BJ (cell line): ENCODE measurements at regions of chr2 and their contacts with region 1.

Region 1: DNA sequence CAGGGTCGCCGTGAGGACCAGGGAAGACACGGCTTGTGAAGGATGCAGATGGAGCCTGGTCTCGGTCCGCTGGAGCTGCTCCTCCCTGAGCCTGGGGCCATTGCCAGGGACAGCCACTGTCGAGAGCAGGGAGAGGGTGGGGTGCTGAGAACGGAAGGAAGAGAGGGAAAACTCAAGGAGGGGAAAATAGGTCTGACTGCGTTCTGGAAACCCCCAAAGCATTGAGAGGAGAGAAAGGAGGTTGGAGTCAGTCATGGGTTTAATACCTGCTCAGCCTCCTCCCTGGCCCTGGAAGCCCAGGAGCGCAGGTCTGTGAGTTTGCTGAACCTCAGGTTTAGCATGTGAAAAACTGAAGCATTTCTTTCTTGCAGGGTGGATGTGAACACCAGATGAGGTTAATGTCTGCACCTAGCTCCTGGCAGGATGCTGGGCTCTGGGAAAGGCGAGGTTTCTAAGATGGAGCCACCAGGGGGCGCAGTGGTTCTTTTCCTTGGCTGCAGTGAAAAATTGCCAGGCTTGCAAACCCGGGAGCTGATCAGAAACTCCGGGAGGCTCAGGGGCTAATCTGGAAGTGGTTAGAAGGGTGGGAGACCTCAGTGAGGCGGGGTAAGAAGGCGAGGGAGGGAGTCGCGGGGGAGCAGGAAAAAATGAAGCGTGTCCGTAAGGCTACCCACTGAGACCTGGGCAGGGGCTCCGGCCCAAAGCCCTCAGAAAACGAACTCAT is 33.6 kb upstream of the RNF149 start:
- DNase-seq: no peak
- H3K4me3 ChIP-seq: peak overlapping the region; percentile 12; the same call in 1 of the 2 replicates
- H3K27me3 ChIP-seq: no peaks in the 10 kb centered on the region
- CTCF ChIP-seq: peak; percentile 89

Region 2: DNA sequence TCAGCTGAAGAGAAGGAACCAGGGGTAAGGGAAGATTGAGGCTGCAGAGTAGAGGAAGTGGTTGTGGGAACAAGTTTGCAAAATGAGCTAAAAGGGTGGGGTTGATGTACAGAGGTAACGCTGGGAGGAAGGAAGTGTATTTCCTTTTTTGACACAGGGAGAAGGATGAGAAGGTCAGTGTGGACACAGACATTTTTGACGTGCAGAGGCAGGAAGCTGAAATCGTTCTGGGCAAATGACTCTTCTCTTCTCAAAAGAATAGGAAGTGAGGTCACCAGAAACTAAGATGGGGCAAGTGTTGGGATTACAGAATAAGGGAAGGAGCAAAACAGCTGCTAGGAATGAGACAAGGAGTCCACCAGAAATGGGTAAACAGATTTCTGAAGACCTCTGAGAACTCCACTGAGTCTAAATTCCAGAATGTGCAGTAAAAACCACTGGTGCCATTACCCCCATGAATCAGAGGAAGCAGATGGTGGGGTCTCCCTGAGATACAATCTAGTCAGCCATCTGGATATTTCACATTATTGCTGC is 13.5 kb before region 1 on chr2:
- CTCF ChIA-PET with region 1: interaction called, 16 read pairs
- POLR2A ChIA-PET with region 1: interaction called, 3 read pairs
- DNase-seq: no peak
- H3K4me3 ChIP-seq: no peak overlapping the region
- H3K27me3 ChIP-seq: no peaks in the 10 kb centered on the region
- CTCF ChIP-seq: no peak

Region 3: GRCh38 chr2:101361121-101361870 is 19.2 kb after region 1 on chr2:
- CTCF ChIA-PET with region 1: interaction called, 13 read pairs
- POLR2A ChIA-PET with region 1: no interaction called
- DNase-seq: no peak
- H3K4me3 ChIP-seq: no peak overlapping the region
- H3K27me3 ChIP-seq: peaks cover 13% of the 10 kb centered on the region
- CTCF ChIP-seq: no peak

Region 4: DNA sequence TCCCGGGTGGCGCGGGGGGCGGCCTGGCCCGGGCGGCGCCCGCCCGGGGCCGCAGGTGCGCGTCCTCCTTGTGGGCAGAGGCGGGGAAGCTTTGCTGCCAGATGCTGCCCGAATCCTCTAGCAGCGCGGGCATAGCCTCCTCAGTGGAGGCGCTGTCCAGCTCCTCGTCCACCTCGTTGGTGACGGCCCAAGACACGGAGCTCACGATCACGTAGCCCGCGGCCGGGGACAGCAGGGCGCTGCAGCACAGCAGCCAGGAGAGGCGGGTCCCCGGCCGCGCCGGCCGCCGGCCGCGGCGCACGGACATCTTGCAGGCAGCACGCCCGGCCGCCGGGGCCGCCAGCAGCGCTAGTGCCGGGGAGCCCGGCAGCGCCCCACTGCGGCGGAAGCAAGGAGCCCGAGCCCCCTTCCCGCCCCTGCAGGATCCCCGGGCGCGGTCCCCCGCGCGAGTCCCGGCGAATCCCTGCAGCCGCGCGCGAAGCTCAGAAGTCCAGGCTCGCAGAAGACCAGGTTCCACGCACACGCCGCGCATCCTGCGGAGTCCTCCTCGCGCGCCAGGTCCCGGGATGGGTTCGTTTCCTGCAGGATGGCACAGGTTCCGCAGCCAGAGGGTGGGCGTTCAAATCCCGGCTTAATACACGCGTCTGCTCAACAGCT is 45.2 kb after region 1 on chr2 and contains the start of gene CREG2:
- CTCF ChIA-PET with region 1: interaction called, 17 read pairs
- POLR2A ChIA-PET with region 1: no interaction called
- DNase-seq: no peak
- H3K4me3 ChIP-seq: peak within 1 kb of the TSS; percentile 39
- H3K27me3 ChIP-seq: peaks cover 12% of the 10 kb centered on the region
- CTCF ChIP-seq: peak; percentile 34
- polyA plus RNA-seq, gene CREG2: not detected in 2 replicates

Region 5: GRCh38 chr2:101405351-101405899 is 63.4 kb after region 1 on chr2:
- CTCF ChIA-PET with region 1: interaction called, 13 read pairs
- POLR2A ChIA-PET with region 1: no interaction called
- DNase-seq: no peak
- H3K4me3 ChIP-seq: no peak overlapping the region
- H3K27me3 ChIP-seq: no peaks in the 10 kb centered on the region
- CTCF ChIP-seq: no peak